ENCODE measurements at regions of chr17 and their contacts with region 1.

Region 1: GRCh38 chr17:78005452-78006171 is 47.1 kb downstream of the TNRC6C start:
- DNase-seq: no peak
- ATAC-seq: no peak
- H3K4me3 ChIP-seq: no peak overlapping the region
- H3K27ac ChIP-seq: no peak overlapping the region
- H3K4me1 ChIP-seq: no peaks in the 10 kb centered on the region
- H3K27me3 ChIP-seq: no peaks in the 10 kb centered on the region
- CTCF ChIP-seq: no peak

Region 2: DNA sequence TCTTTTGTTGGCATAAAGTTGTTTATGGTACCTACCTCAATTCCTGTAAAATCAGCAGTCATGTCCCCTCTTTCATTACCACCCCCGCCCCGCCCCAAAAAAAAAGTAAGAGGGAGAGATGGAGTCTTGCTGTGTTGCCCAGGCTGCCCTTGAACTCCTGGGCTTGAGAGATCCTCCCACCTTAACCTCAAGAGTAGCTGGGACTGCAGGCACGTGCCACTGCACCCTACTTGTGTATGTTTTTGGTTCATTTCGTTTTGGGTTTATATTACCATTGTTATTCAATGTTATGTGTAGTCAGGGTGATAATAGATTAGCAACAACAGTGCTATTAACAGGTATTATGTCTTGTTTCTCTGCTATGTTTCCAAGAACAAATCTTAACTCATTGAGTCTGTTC is 31.2 kb before region 1 on chr17:
- CTCF ChIA-PET with region 1: no interaction called
- POLR2A ChIA-PET with region 1: interaction called, 21 read pairs
- in situ Hi-C with region 1: no loop called
- intact Hi-C with region 1: no loop called
- DNase-seq: no peak
- ATAC-seq: no peak
- H3K4me3 ChIP-seq: no peak overlapping the region
- H3K27ac ChIP-seq: no peak overlapping the region
- H3K4me1 ChIP-seq: no peaks in the 10 kb centered on the region
- H3K27me3 ChIP-seq: no peaks in the 10 kb centered on the region; the same call in 1 of the 2 replicates
- CTCF ChIP-seq: no peak

Region 3: GRCh38 chr17:78154903-78155811 is 149.5 kb after region 1 on chr17:
- CTCF ChIA-PET with region 1: no interaction called
- POLR2A ChIA-PET with region 1: no interaction called
- in situ Hi-C with region 1: no loop called
- intact Hi-C with region 1: no loop called
- DNase-seq: no peak
- ATAC-seq: no peak
- H3K4me3 ChIP-seq: no peak overlapping the region
- H3K27ac ChIP-seq: no peak overlapping the region
- H3K4me1 ChIP-seq: no peaks in the 10 kb centered on the region
- H3K27me3 ChIP-seq: no peaks in the 10 kb centered on the region
- CTCF ChIP-seq: no peak

Measured in Panc1 (cell line).